Motor neuron (in vitro differentiated cells): ENCODE measurements at regions of chr5 and their contacts with region 1.

Region 1: GRCh38 chr5:150461231-150461630 is 11.7 kb upstream of the RPS14 start:
- ATAC-seq: no peak
- H3K4me3 ChIP-seq: no peak overlapping the region
- H3K27ac ChIP-seq: no peak overlapping the region
- H3K4me1 ChIP-seq: peaks cover 3 to 6% of the 10 kb centered on the region in 2 donors

Region 2: GRCh38 chr5:149913436-149914419 is 547.5 kb before region 1 on chr5:
- in situ Hi-C with region 1: no loop called
- ATAC-seq: no peak
- H3K4me3 ChIP-seq: no peak overlapping the region
- H3K27ac ChIP-seq: no peak overlapping the region
- H3K4me1 ChIP-seq: no peaks in the 10 kb centered on the region

Region 3: DNA sequence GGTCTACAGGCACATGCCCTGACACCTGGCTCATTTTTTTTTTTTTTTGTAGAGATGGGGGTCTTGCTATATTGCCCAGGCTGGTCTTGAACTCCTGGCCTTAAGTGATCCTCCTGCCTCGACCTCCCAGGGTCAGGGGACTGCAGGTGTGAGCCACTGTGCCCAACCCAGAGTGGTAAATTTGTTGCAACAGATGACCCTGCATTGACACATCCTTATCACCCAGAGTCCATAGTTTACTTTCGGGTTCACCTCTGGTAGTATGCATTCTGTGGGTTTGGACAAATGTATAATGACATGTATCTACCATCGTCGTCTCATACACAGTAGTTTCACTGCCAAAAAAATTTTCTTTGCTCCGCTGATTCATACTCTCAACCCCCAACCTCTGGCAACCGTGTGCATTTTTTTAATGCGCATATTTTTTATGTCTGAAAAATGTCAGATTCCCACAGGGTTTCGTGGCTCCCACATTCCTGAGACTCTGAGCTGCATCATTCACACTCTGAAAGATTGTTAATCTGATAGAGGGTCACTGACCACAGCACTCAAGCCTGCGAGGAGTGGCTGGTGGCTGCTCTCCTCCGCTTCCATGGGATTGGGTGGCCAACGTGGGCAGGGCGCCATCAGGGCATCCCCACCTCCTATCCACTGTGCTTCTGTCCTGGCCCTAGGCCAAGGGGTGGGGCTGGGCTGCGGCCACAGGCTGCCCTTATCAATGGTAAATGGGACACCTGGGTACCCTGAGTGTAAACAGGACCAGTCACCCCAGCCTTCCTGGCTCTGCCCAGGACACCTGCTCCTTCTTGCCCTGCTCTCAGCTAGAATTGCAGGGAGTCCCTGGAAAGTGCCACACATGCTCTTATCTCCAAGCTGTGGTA is 56.3 kb after region 1 on chr5:
- in situ Hi-C with region 1: loop called in 1 of 9 experiments (anchors 10 kb)
- ATAC-seq: peak; percentile 1 to 91 (median 28)
- H3K4me3 ChIP-seq: no peak overlapping the region
- H3K27ac ChIP-seq: no peak overlapping the region
- H3K4me1 ChIP-seq: peaks cover 42 to 44% of the 10 kb centered on the region in 2 donors

Region 4: GRCh38 chr5:150544611-150545219 is 83.5 kb after region 1 on chr5:
- in situ Hi-C with region 1: loop called in 1 of 9 experiments (anchors 10 kb)
- ATAC-seq: peak; percentile 72 to 98 (median 83)
- H3K4me3 ChIP-seq: no peak overlapping the region
- H3K27ac ChIP-seq: no peak overlapping the region
- H3K4me1 ChIP-seq: no peaks in the 10 kb centered on the region